ENCODE measurements at regions of chr6 and their contacts with region 1.

Region 1: DNA sequence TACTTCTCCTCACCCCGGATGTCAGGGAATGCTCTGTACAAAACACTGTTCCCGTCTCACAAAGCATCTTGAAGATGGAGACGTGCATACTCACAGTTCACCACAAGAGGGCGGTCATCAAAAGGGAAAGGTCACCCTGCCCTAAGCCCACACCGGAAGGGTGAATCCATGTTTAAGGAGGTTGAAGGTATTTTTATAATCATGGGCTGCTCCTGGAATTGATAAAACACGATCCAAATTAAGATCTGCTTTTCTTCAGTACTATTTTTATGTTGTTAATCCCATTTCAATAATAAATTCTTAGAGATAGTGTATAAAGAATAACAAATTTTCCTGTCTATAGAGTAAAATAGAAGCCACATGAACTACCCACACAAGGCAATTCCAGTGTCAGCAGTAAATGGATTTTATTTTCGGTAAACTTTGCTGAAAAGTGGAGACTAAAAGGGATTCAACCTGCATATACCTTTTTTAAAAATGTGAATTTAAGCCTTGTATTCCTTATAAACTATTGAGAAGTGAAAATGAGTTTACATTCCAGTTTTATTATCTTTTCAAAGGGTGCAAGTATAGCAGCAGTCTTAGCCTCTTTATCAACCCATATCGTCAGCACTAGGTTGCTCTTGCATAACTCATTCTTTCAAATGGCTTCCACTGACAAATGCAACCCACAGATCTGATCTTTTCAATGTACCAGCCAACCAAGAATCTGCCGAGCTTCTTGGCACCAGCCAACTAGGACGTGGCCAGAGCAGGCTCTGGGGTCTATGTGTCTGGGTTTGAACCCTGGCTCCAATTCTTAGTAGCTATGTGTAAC is 79.7 kb upstream of the MBOAT1 start:
- DNase-seq: peak; percentile 36 to 72 (median 62)
- ATAC-seq: peak; percentile 94
- H3K4me3 ChIP-seq: no peak overlapping the region
- H3K4me3 Mint-ChIP-seq: peak overlapping the region in 5 of 10 donors; percentile 1 to 54 (median 44)
- H3K27ac ChIP-seq: no peak overlapping the region
- H3K27ac Mint-ChIP-seq: peak overlapping the region in 4 of 9 donors; percentile 3 to 44 (median 22)
- H3K4me1 ChIP-seq: peaks cover 8 to 15% of the 10 kb centered on the region in 2 donors
- H3K4me1 Mint-ChIP-seq: peaks cover 6 to 34% (median 25%) of the 10 kb centered on the region in 7 donors
- H3K27me3 ChIP-seq: no peaks in the 10 kb centered on the region
- H3K27me3 Mint-ChIP-seq: peaks cover 0 to 6% (median 0%) of the 10 kb centered on the region in 5 donors

Region 2: GRCh38 chr6:20092071-20092566 is 199.9 kb before region 1 on chr6:
- CTCF ChIA-PET with region 1: no interaction called
- POLR2A ChIA-PET with region 1: no interaction called
- intact Hi-C with region 1: loop called (anchors 1 to 2 kb)
- DNase-seq: peak in 5 of 9 donors; percentile 10 to 23 (median 14)
- ATAC-seq: no peak
- H3K4me3 ChIP-seq: no peak overlapping the region
- H3K4me3 Mint-ChIP-seq: no peak overlapping the region
- H3K27ac ChIP-seq: no peak overlapping the region
- H3K27ac Mint-ChIP-seq: no peak overlapping the region
- H3K4me1 ChIP-seq: no peaks in the 10 kb centered on the region
- H3K4me1 Mint-ChIP-seq: no peaks in the 10 kb centered on the region
- H3K27me3 ChIP-seq: no peaks in the 10 kb centered on the region
- H3K27me3 Mint-ChIP-seq: no peaks in the 10 kb centered on the region

Region 3: GRCh38 chr6:20212392-20213217 is 79.4 kb before region 1 on chr6 and contains the start of gene MBOAT1:
- CTCF ChIA-PET with region 1: no interaction called
- POLR2A ChIA-PET with region 1: no interaction called
- intact Hi-C with region 1: loop called (anchors 2 kb)
- DNase-seq: peak; percentile 38 to 85 (median 54)
- ATAC-seq: peak; percentile 82
- H3K4me3 ChIP-seq: peak within 1 kb of the TSS; percentile 73
- H3K4me3 Mint-ChIP-seq: peak within 1 kb of the TSS; percentile 82 to 99 (median 96)
- H3K27ac ChIP-seq: peak within 1 kb of the TSS; percentile 62
- H3K27ac Mint-ChIP-seq: peak within 1 kb of the TSS; percentile 56 to 94 (median 91)
- H3K4me1 ChIP-seq: peaks cover 11 to 20% of the 10 kb centered on the region in 2 donors
- H3K4me1 Mint-ChIP-seq: peaks cover 18 to 41% (median 27%) of the 10 kb centered on the region in 7 donors
- H3K27me3 ChIP-seq: no peaks in the 10 kb centered on the region
- H3K27me3 Mint-ChIP-seq: peaks cover 0 to 5% (median 0%) of the 10 kb centered on the region in 5 donors
- total RNA-seq, gene MBOAT1: 6.2 to 24.7 (median 10.0) TPM

Region 4: GRCh38 chr6:20454246-20454701 is 162.3 kb after region 1 on chr6:
- CTCF ChIA-PET with region 1: interaction called, 4 read pairs
- POLR2A ChIA-PET with region 1: no interaction called
- intact Hi-C with region 1: loop called (anchors 1 kb)
- DNase-seq: peak in 7 of 9 donors; percentile 4 to 36 (median 18)
- ATAC-seq: peak; percentile 69
- H3K4me3 ChIP-seq: no peak overlapping the region
- H3K4me3 Mint-ChIP-seq: no peak overlapping the region
- H3K27ac ChIP-seq: no peak overlapping the region
- H3K27ac Mint-ChIP-seq: peak overlapping the region in 2 of 9 donors; percentile 6 to 22
- H3K4me1 ChIP-seq: no peaks in the 10 kb centered on the region
- H3K4me1 Mint-ChIP-seq: peaks cover 8 to 37% (median 29%) of the 10 kb centered on the region in 7 donors
- H3K27me3 ChIP-seq: no peaks in the 10 kb centered on the region
- H3K27me3 Mint-ChIP-seq: no peaks in the 10 kb centered on the region

Region 5: DNA sequence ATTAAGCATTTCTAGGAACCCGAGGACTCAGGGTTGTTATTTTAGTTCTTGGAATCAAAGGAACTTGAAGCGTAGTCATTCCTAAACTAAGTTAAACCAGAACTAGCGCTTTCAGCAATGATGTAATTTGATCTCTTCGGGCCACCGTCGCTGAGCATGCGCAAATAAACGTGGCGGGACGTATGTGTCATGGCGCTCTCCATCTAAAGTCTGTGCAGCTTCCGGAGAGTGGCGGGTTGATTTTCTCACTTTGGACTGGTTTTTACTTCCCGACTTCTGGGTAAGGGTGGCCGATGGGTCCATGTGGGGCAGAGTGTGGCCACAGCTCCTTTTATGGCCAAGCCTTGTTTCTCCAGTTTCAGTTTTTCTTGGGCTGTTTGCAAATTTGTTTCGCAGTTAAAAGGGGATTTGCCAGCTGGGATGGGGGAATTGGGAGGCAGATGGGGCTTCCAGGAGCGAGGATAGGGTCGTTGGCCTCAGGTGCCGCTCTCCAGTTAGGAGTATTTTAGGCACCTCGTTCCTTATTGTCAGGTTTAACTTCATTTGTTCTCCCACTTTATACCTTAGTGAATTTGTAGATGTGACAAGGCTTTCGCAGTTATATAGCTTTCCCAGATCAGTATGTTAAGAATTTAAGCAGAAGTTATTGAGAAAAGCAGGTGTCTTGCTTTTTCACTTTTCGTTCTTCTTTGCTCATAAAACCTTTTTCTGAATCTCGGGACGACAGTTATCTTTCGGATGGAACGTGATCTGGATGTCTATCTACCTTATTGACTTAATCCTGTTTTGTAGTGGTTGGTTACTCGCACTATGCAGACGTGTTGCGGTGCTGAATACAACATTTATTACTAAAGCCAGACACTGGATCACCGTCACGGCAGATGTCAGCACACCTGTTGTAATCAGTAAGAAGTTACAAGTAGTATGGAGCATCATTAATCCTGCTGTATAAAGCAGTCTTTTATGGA is 242.6 kb after region 1 on chr6 and contains the start of gene CDKAL1:
- CTCF ChIA-PET with region 1: interaction called, 25 read pairs
- POLR2A ChIA-PET with region 1: interaction called, 3 read pairs
- intact Hi-C with region 1: no loop called
- DNase-seq: peak; percentile 69 to 89 (median 86)
- ATAC-seq: peak; percentile 95
- H3K4me3 ChIP-seq: peak within 1 kb of the TSS; percentile 92
- H3K4me3 Mint-ChIP-seq: peak within 1 kb of the TSS; percentile 88 to 100 (median 97)
- H3K27ac ChIP-seq: peak within 1 kb of the TSS; percentile 89
- H3K27ac Mint-ChIP-seq: peak within 1 kb of the TSS; percentile 94 to 100 (median 99)
- H3K4me1 ChIP-seq: peaks cover 0 to 11% of the 10 kb centered on the region in 2 donors
- H3K4me1 Mint-ChIP-seq: peaks cover 22 to 53% (median 41%) of the 10 kb centered on the region in 7 donors
- H3K27me3 ChIP-seq: no peaks in the 10 kb centered on the region
- H3K27me3 Mint-ChIP-seq: peaks cover 0 to 4% (median 0%) of the 10 kb centered on the region in 5 donors
- total RNA-seq, gene CDKAL1: 23.6 to 30.3 (median 25.0) TPM

Region 6: DNA sequence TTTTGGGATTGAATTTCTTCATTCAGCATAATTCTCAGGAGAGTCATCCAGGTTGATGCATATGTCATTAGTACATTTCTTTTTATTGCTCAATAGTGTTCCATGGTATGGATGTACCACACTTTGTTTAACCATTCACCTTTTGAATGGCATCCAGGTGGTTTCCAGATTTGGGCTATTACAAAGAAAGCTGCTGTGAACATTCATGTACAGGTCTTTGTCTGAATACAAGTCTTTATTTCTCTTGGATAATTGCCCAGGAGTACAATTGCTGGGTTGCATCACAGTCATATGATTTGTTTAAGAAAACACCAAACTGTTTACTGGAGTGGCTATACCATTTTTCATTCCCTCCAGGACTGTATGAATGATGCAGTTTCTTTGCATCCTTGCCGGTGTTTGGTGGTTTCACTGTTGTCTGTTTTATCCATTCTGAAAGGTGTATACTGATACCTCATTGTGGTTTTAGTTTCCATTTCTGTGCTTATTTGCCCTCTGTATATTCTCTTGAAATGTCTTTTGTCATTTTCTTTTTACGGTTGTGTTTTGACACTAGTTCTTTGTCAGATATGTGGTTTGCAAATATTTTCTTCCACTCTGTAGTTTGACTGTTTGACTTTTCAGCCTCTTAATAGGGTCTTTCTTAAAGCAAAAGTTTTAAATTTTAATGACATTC is 251.1 kb after region 1 on chr6:
- CTCF ChIA-PET with region 1: no interaction called
- POLR2A ChIA-PET with region 1: interaction called, 4 read pairs
- intact Hi-C with region 1: loop called in 1 of 2 experiments (anchors 1 kb)
- DNase-seq: no peak
- ATAC-seq: peak; percentile 27
- H3K4me3 ChIP-seq: no peak overlapping the region
- H3K4me3 Mint-ChIP-seq: peak overlapping the region in 1 of 10 donors; percentile 55
- H3K27ac ChIP-seq: no peak overlapping the region
- H3K27ac Mint-ChIP-seq: peak overlapping the region in 3 of 9 donors; percentile 1 to 65 (median 56)
- H3K4me1 ChIP-seq: no peaks in the 10 kb centered on the region
- H3K4me1 Mint-ChIP-seq: peaks cover 23 to 57% (median 55%) of the 10 kb centered on the region in 7 donors
- H3K27me3 ChIP-seq: no peaks in the 10 kb centered on the region
- H3K27me3 Mint-ChIP-seq: no peaks in the 10 kb centered on the region

Measured in naive thymus-derived CD4-positive, alpha-beta T cell (primary cell).